Endothelial cell of umbilical vein (primary cell): ENCODE measurements at regions of chr13 and their contacts with region 1.

Region 1: GRCh38 chr13:28658796-28659620 is at the start of gene POMP:
- DNase-seq: peak; percentile 91
- H3K4me3 ChIP-seq: peak within 1 kb of the TSS; percentile 90 to 96 (median 96)
- H3K27ac ChIP-seq: peak within 1 kb of the TSS; percentile 99
- H3K4me1 ChIP-seq: peaks cover 20% of the 10 kb centered on the region
- H3K27me3 ChIP-seq: no peaks in the 10 kb centered on the region
- CTCF ChIP-seq: no peak
- POLR2A ChIP-seq: peak; percentile 43
- total RNA-seq, gene POMP: 88.9 and 105 TPM in 2 replicates

Region 2: DNA sequence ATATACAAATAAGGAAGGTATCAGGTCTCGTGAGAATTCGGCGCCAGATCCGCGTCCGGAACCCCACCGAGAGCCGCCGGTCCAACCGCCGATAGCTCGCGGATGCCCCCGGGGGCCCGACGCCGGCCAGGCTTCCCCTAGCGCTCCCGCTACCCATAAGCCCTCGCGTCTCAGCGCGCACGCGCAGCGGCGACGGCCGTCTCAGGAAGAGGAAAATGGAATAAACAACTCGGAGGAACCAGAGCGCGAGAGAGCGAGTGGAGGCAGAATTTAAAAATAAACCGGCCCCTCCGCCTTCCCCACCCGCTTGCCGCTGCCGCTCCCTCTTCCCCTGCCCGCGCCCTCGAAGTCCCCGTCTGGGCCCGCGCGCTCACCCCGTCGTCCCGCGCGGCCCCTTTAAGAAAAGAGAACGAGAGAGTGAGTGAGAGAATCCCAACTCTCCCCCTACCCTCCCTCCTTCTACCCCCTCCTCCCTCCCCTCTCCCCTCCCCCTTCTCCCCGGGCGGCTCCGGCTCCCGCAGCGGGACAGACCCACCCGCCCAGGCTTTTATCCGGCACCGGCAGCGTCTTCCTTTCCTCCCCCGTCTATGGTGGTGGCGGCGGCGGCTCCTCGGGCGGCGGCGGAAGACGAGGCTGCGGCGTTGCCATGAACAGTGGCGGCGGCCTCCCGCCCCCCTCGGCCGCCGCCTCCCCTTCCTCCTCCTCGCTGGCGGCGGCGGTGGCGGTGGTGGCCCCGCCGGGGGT is 520.8 kb before region 1 on chr13 and contains the start of gene PAN3:
- CTCF ChIA-PET with region 1: no interaction called
- POLR2A ChIA-PET with region 1: no interaction called
- dilution Hi-C with region 1: no loop called
- intact Hi-C with region 1: loop called (anchors 1 kb)
- DNase-seq: peak; percentile 92
- H3K4me3 ChIP-seq: peak within 1 kb of the TSS; percentile 78 to 100 (median 99)
- H3K27ac ChIP-seq: peak within 1 kb of the TSS; percentile 93
- H3K4me1 ChIP-seq: peaks cover 20% of the 10 kb centered on the region
- H3K27me3 ChIP-seq: no peaks in the 10 kb centered on the region
- CTCF ChIP-seq: no peak
- POLR2A ChIP-seq: peak; percentile 91
- total RNA-seq, gene PAN3: 31.6 and 31.9 TPM in 2 replicates

Region 3: DNA sequence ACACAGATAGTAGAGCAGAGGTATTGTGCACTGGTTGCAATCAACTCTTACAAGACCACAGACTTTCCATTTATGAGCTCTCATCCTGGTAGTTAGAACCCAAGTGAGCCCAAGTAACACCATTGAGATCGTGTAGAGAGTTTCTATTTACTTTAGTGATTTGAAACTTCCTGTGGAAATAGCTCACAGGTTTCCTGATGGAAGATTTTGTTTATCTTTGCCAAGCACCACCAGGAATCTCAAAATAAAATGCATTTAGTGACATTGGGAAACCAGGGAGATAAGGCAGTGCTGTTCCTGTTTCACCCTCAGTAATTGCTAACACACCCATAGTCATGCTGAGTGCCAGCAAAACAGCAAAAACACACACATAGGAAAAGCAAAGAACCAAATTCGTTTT is 266.6 kb before region 1 on chr13:
- CTCF ChIA-PET with region 1: no interaction called
- POLR2A ChIA-PET with region 1: no interaction called
- dilution Hi-C with region 1: no loop called
- intact Hi-C with region 1: loop called (anchors 1 kb)
- DNase-seq: peak; percentile 91
- H3K4me3 ChIP-seq: no peak overlapping the region
- H3K27ac ChIP-seq: peak overlapping the region; percentile 88
- H3K4me1 ChIP-seq: peaks cover 89% of the 10 kb centered on the region
- H3K27me3 ChIP-seq: no peaks in the 10 kb centered on the region
- CTCF ChIP-seq: no peak
- POLR2A ChIP-seq: no peak

Region 4: GRCh38 chr13:28494776-28495537 is 164.1 kb before region 1 on chr13 and contains the start of gene FLT1:
- CTCF ChIA-PET with region 1: interaction called, 3 read pairs
- POLR2A ChIA-PET with region 1: no interaction called
- dilution Hi-C with region 1: no loop called
- intact Hi-C with region 1: loop called (anchors 2 kb)
- DNase-seq: peak; percentile 74
- H3K4me3 ChIP-seq: peak within 1 kb of the TSS; percentile 95 to 98 (median 96)
- H3K27ac ChIP-seq: peak within 1 kb of the TSS; percentile 85
- H3K4me1 ChIP-seq: peaks cover 44% of the 10 kb centered on the region
- H3K27me3 ChIP-seq: no peaks in the 10 kb centered on the region
- CTCF ChIP-seq: no peak
- POLR2A ChIP-seq: peak; percentile 90
- total RNA-seq, gene FLT1: 104 and 178 TPM in 2 replicates

Region 5: GRCh38 chr13:28510542-28510941 is 148.5 kb before region 1 on chr13:
- CTCF ChIA-PET with region 1: no interaction called
- POLR2A ChIA-PET with region 1: no interaction called
- dilution Hi-C with region 1: no loop called
- intact Hi-C with region 1: no loop called
- DNase-seq: no peak
- H3K4me3 ChIP-seq: no peak overlapping the region
- H3K27ac ChIP-seq: no peak overlapping the region
- H3K4me1 ChIP-seq: no peaks in the 10 kb centered on the region
- H3K27me3 ChIP-seq: no peaks in the 10 kb centered on the region
- CTCF ChIP-seq: no peak
- POLR2A ChIP-seq: no peak

Region 6: DNA sequence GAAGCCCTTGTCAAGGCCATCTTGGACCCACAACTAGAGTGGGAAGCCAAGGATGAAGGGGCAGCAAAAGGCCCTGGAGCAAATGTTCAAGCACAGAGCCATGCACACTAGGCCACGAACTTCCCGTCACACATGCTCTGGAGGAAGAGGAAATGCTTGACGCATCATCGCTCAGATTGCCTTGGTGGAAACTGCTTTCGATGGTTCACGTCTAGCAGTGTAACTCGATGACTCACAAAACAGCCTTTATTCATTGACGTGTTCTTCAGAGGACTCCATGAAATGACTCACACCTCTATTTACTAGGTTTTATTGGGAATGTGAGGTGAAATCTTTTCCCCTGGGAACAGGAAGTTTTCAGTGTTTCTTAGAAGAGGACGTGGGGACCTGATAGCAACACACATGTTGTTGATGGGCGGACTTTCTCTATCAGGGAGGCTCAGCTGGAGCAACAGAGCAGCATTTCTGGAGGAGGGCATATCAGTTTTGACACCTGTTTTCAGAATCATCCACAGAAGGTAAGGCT is 84.3 kb before region 1 on chr13:
- CTCF ChIA-PET with region 1: interaction called, 3 read pairs
- POLR2A ChIA-PET with region 1: no interaction called
- dilution Hi-C with region 1: no loop called
- intact Hi-C with region 1: loop called (anchors 1 kb)
- DNase-seq: peak; percentile 98
- H3K4me3 ChIP-seq: no peak overlapping the region
- H3K27ac ChIP-seq: peak overlapping the region; percentile 99
- H3K4me1 ChIP-seq: peaks cover 10% of the 10 kb centered on the region
- H3K27me3 ChIP-seq: no peaks in the 10 kb centered on the region
- CTCF ChIP-seq: no peak
- POLR2A ChIP-seq: no peak